AG04450 (cell line): ENCODE measurements at regions of chr6 and their contacts with region 1.

Region 1: DNA sequence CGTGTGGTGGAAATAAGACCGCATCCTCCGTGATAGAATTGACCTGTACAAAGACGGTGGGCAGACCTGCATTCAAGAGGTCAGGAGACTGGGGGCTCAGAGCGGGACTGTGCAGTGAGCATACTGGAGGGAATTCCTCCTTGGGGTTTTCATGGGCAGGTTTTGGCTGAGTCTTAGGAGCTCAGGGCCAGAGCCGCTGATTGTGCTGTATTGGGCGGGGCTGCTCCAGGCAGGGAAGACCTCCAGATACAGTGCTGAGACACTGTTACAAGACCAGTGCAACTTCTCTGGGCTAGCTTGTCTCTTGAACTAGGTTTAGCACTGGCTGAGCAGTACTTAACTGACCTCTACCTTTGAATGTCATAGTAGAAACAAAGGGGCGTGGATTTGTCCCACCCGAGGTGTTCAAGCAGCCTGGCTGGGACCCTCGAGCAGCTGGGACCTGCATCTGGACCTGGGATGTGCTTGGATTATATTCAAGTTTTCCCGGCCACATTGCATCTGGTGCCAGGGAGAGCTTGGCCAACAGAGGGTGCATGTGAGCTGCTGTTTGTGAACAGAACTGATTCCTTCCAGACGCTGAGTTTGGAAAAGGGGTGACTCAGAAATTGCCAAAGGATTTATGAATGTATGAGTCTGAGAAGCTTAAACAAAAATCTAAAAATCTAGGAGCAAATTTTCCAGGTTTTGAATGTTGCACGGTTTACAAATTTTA is 33.4 kb upstream of the SLC22A1 start:
- DNase-seq: peak; percentile 76
- H3K4me3 ChIP-seq: no peak overlapping the region
- H3K27ac ChIP-seq: peak overlapping the region; percentile 47
- H3K27me3 ChIP-seq: no peaks in the 10 kb centered on the region
- CTCF ChIP-seq: peak; percentile 95

Region 2: GRCh38 chr6:159862103-159862502 is 226.1 kb before region 1 on chr6:
- CTCF ChIA-PET with region 1: interaction called, 20 read pairs
- POLR2A ChIA-PET with region 1: no interaction called
- DNase-seq: no peak
- H3K4me3 ChIP-seq: no peak overlapping the region
- H3K27ac ChIP-seq: no peak overlapping the region
- H3K27me3 ChIP-seq: no peaks in the 10 kb centered on the region
- CTCF ChIP-seq: no peak

Region 3: DNA sequence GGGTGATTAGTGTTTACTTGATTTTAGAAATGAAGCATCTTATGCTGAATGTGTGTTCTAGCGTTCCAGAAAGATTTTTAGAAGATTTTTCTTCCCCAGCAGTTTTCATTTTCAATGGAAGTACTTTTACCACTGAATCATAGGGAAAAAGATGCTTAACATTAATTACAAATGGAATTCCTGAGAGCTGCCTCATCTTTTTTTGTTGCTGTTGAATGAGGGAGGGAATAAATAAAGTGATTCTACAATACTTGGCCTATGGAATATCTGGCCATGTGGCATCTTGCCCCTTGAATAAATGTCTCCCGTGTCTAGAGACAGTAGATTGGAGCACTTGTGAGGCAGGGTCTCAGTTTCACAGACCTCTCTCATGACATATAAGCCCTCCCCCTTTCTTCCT is 10.7 kb before region 1 on chr6:
- CTCF ChIA-PET with region 1: interaction called, 29 read pairs
- POLR2A ChIA-PET with region 1: interaction called, 3 read pairs
- DNase-seq: peak; percentile 29
- H3K4me3 ChIP-seq: no peak overlapping the region
- H3K27ac ChIP-seq: peak overlapping the region; percentile 47
- H3K27me3 ChIP-seq: no peaks in the 10 kb centered on the region
- CTCF ChIP-seq: no peak

Region 4: GRCh38 chr6:160102956-160103824 is 15.0 kb after region 1 on chr6:
- CTCF ChIA-PET with region 1: interaction called, 51 read pairs
- POLR2A ChIA-PET with region 1: interaction called, 3 read pairs
- DNase-seq: no peak
- H3K4me3 ChIP-seq: no peak overlapping the region
- H3K27ac ChIP-seq: no peak overlapping the region
- H3K27me3 ChIP-seq: no peaks in the 10 kb centered on the region
- CTCF ChIP-seq: peak; percentile 39

Region 5: GRCh38 chr6:160462551-160463109 is 374.4 kb after region 1 on chr6:
- CTCF ChIA-PET with region 1: interaction called, 186 read pairs
- POLR2A ChIA-PET with region 1: no interaction called
- DNase-seq: peak; percentile 68
- H3K4me3 ChIP-seq: no peak overlapping the region
- H3K27ac ChIP-seq: peak overlapping the region; percentile 62
- H3K27me3 ChIP-seq: no peaks in the 10 kb centered on the region
- CTCF ChIP-seq: no peak

Region 6: DNA sequence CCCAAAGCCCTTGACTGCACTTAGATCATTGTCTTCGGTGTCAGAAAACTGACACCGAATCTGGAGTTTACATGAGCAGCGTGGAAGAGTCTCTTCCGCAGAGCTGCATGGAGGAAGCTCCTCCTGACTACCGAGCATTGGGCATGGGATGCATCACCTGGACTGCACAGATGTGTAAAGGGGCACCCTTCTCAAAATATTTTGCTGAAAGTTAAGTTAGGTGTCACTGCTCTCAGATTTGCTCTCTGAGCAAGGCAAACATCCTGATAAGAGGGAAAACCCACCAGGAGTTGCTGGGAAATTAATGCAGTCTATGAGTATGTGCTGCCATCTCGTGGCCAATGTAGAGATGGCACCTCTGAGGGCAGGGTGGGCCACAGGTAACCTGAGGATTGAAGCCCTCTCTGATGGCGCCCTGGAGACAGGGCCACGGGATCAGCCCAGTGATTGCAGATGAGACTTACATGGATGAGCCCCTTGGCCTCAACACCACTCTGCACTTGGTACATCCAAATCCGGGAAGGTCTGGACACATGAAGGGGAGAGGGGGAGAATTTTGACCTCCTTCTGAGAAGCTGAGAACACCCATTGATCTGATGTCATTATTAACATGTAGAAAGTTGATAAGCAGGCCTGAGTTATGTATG is 445.9 kb after region 1 on chr6:
- CTCF ChIA-PET with region 1: interaction called, 30 read pairs
- POLR2A ChIA-PET with region 1: no interaction called
- DNase-seq: no peak
- H3K4me3 ChIP-seq: no peak overlapping the region
- H3K27ac ChIP-seq: no peak overlapping the region
- H3K27me3 ChIP-seq: no peaks in the 10 kb centered on the region
- CTCF ChIP-seq: peak; percentile 89

Region 7: DNA sequence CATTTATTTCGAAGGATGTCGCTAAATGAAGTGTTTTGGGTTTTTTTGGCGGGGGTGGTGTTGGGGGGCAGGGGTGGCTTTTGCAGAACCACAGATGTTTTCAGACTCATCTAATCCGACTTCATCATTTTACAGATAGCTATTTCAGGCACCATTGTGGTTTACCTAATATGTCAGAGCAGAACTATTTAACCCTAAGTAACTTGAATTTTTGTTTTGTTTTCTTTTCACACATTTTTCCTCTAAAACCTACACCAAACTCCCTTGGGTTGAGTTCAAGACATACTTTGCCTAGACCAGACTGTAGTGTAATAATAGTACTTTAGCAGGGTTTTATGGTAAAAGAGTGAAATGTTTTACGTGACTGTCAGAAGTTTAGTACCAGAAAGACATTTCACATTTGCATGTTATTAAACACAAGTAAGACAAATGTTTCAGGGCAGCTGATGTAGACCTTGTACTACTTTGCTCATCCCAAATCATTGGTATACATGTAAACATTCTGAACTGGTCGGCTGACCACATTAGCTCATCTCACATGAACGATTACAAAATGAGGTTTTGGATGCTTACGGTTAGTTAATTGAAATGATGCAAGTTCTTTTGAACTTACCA is 941.1 kb after region 1 on chr6:
- CTCF ChIA-PET with region 1: interaction called, 15 read pairs
- POLR2A ChIA-PET with region 1: no interaction called
- DNase-seq: peak; percentile 87
- H3K4me3 ChIP-seq: no peak overlapping the region
- H3K27ac ChIP-seq: no peak overlapping the region
- H3K27me3 ChIP-seq: no peaks in the 10 kb centered on the region
- CTCF ChIP-seq: no peak

Region 8: DNA sequence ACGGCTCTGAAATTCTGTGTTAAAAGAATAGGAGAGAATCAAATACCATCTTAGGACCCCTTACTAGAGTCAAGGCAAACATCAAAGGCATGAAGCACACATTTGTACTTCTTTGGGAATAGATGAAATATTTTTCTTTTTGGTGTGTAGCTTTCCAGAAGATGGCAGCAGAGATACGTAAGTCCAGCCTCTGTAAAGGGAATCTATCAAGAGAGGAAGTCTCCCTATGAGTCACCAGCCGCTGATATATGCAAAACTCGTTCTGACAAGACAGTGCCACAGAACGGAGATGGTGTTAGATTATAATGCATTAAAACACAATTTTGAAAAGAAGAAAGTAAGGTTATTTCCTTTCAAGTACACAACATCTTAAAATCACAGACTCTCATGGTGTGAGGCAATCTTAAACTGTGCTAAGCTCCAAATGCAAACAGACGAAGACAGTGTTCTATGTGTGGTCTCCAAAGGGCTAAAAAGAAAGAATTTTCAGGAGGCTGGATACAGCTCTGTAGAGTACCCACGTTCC is 1305.7 kb after region 1 on chr6:
- CTCF ChIA-PET with region 1: no interaction called
- POLR2A ChIA-PET with region 1: no interaction called
- DNase-seq: no peak
- H3K4me3 ChIP-seq: no peak overlapping the region; the same call in 1 of the 2 replicates
- H3K27ac ChIP-seq: no peak overlapping the region
- H3K27me3 ChIP-seq: peaks cover 2% of the 10 kb centered on the region
- CTCF ChIP-seq: peak; percentile 71